Dorsolateral prefrontal cortex (tissue), 120 donors: ENCODE measurements at regions of chr4 and their contacts with region 1.

Region 1: DNA sequence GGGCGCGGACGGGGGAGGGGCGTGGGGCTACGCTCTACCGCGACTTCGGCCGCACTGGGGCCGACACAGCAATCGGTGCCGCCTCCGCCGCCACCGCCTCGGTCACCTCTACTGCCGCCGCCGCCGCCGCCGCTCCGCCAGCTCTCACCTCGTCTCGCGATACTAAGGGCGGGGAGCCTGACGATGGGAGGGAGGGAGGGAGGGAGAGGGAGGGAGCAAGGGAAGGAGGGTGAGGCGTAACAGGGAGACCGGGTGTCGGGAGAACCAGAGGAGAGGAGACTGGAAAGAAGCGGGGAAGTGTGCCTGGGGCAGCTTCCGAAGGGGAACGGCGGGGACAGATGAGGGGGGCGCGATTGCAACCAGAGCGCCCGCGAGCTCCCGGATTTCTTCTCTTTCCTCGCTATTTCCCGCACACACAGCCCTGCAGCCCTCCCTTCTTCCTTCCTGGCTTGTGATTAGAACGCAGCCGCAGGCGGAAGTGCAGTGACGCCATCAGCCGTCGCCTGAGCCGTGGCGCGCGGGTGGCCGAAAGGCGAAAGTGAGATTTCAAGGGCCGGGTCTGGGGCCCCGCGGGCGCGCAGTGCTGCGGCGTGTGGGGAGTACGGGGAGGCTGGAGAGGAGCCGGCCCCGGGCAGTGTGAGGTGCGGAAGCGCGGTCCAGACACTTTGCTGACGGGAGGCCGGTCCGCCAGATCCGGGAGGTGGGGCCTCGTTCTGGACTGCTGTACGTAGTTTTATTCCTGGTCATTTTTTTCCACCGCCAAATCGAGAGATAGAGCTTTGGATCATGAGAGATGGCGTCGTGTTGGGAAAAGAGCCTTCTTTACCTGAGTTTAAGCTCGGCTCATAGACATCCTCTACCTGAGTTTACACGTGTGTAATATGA is at the start of gene ANKRD17:
- DNase-seq: peak; percentile 83 to 91 (median 88)
- H3K4me3 ChIP-seq: peak within 1 kb of the TSS; percentile 50 to 100 (median 87)
- H3K27ac ChIP-seq: peak within 1 kb of the TSS; percentile 76 to 100 (median 98)
- H3K27me3 ChIP-seq: no peaks in the 10 kb centered on the region
- CTCF ChIP-seq: peak in 36 of 56 donors; percentile 1 to 49 (median 25)
- total RNA-seq, gene ANKRD17: 75.6 to 126 (median 105) TPM

Region 2: DNA sequence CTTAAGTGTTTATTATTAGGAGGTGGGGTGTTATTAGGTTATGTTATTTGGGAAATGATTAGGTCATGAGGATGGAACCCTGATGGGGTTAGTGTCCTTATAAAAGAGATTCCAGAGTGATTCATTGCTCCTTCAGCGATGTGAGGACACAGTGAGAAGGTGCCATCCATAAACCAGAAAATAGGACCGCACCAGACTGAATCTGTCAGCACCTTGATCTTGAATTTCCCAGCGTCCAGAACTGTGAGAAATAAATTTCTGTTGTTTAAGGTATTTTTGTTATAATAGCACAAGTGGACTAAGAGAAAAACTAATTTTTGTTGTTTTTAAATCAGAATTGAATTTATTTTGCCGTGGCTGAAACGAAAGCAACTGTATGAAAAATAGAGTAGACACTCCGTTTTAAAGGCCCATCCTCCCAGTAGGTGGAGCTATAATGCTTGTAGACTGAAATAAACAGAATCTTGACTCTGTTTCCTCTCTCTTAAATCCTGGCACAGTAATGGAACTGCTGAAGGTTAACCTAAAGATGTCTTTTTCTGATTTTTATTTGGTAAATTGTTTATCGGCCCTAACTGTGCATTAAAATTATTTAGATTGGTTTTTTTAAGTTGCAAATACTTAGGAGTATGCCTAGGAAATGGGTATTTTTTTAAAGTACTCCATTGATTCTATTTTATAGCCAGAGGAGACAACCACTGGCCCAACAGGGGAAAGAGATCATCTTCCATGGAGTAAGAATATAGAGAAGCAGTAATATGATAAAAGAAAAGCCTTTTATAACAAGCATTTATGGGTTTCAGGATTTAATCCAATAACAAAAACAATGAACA is 556.7 kb before region 1 on chr4:
- intact Hi-C with region 1: loop called in 1 of 2 experiments (anchors 10 kb)
- DNase-seq: peak in 1 of 10 donors; percentile 28
- H3K4me3 ChIP-seq: peak overlapping the region in 56 of 59 donors; percentile 4 to 66 (median 46)
- H3K27ac ChIP-seq: no peak overlapping the region
- H3K27me3 ChIP-seq: no peaks in the 10 kb centered on the region
- CTCF ChIP-seq: peak; percentile 37 to 86 (median 63)

Region 3: GRCh38 chr4:73010789-73011650 is 247.9 kb before region 1 on chr4:
- intact Hi-C with region 1: no loop called
- DNase-seq: no peak
- H3K4me3 ChIP-seq: no peak overlapping the region
- H3K27ac ChIP-seq: no peak overlapping the region
- H3K27me3 ChIP-seq: no peaks in the 10 kb centered on the region
- CTCF ChIP-seq: no peak

Region 4: DNA sequence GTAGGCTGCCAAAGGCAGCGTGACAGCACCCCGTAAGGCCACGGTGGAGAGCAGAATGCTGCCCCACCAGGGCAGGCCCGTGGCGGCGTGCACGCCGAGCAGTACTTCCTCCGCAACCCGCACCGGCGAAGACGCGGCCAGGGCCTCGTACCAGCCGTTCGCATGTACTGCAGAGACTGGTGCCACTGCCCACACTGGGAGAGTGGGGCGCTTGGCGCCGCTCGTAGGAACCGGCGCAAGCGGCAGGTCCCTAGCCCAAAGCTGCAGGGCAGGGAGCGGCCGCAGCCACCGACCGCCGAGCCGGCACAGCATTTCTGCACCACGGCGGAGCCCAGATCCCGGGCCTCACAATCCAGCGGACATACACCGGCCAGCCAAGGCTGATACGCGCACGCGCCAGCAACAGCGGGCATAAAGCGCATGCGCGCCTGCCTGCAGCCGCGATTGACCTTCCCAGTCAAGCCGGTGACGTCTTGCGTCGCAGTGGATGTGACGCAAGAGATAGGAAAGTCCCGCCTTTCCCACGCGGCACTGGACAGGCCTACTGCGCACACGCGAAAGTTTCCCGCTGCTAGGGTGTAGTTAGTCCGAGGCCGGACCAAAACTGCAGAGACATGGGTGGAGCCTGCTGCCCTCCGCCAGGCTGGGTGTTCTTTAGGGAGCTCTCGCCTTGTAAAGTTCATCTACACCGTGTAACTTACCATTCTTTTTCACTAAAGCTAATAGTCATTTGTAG is 189.4 kb before region 1 on chr4 and contains the start of gene COX18:
- intact Hi-C with region 1: loop called (anchors 1 kb)
- DNase-seq: peak; percentile 94 to 98 (median 97)
- H3K4me3 ChIP-seq: peak within 1 kb of the TSS; percentile 69 to 99 (median 92)
- H3K27ac ChIP-seq: peak within 1 kb of the TSS; percentile 59 to 99 (median 95)
- H3K27me3 ChIP-seq: no peaks in the 10 kb centered on the region
- CTCF ChIP-seq: peak in 23 of 56 donors; percentile 7 to 55 (median 24)
- total RNA-seq, gene COX18: 7.4 to 18.5 (median 12.7) TPM

Region 5: DNA sequence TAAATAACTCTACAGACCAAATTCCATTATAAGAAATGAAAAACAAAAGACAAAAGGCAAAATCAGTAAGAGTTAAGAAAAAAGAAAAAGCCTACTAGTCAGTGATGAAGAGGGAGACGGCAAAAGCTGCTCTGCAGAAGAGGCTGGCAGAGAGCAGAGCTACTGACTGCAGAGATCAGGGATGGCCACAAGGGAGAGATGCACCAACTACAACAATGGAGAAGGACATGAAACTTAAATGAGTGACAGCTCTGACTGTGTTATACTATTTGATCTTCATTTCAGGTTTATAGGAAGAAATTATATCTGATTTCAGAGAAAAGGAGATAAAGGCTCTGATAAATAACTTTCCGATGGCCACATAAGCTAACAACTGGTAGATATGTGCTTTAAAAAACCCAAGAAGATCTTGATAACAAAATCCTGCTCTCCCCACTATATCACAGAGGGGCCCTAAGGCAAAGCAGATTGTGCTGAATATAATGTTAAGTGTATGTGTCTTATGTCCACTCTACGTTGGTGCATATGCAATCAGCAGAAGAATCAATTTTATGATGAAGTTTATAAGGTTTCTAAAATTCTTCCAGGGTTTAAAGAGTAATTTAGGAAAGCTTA is 131.0 kb before region 1 on chr4:
- intact Hi-C with region 1: loop called in 1 of 2 experiments (anchors 10 kb)
- DNase-seq: peak in 2 of 10 donors; percentile 22 to 41
- H3K4me3 ChIP-seq: no peak overlapping the region
- H3K27ac ChIP-seq: peak overlapping the region in 7 of 59 donors; percentile 3 to 47 (median 28)
- H3K27me3 ChIP-seq: no peaks in the 10 kb centered on the region
- CTCF ChIP-seq: peak in 49 of 56 donors; percentile 18 to 70 (median 43)

Region 6: GRCh38 chr4:73142995-73143547 is 115.9 kb before region 1 on chr4:
- intact Hi-C with region 1: loop called in 1 of 2 experiments (anchors 5 kb)
- DNase-seq: no peak
- H3K4me3 ChIP-seq: no peak overlapping the region
- H3K27ac ChIP-seq: peak overlapping the region in 3 of 59 donors; percentile 5 to 47 (median 35)
- H3K27me3 ChIP-seq: no peaks in the 10 kb centered on the region
- CTCF ChIP-seq: peak in 45 of 56 donors; percentile 11 to 58 (median 29)

Region 7: DNA sequence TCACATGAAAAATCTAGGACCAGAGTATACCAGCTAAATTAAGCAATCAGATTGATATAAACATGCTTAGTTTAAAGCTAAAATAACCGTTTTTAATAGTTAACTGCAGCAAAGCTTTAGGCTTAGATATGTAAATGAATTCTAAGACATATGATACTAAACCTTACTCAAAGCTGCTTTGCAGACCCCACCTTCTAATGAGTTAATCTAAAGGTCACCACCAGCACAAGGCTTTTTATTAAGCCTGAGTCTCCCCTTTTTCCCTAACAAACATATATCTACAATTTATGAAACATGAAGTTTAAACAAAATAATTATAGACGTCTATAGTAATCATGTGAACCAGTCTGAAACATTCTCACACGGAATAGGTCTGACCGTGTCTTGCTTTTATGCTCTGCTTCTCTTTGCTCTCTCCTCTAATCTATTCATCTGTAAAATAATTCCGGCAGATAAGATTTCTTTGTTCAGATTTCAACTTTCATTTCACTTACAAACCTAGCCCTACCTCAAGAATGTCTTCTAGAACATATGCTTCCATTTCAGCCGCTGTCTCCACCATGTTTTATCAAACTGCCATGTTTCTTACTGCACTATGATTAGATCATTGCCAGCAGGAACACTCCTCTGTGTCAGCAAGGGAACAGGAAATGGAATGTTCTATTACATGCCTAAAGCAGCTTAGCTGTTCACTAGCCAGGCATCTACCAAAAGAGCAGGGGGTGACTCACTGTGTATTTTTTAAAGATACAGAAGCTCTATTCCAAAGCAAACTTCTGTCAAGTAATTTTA is 36.3 kb before region 1 on chr4:
- intact Hi-C with region 1: loop called in 1 of 2 experiments (anchors 2 kb)
- DNase-seq: peak in 6 of 10 donors; percentile 42 to 84 (median 48)
- H3K4me3 ChIP-seq: peak overlapping the region; percentile 31 to 89 (median 65)
- H3K27ac ChIP-seq: peak overlapping the region in 58 of 59 donors; percentile 14 to 92 (median 80)
- H3K27me3 ChIP-seq: no peaks in the 10 kb centered on the region
- CTCF ChIP-seq: peak in 11 of 56 donors; percentile 8 to 40 (median 31)